K562 (cell line): ENCODE measurements at regions of chr19 and their contacts with region 1.

Region 1: DNA sequence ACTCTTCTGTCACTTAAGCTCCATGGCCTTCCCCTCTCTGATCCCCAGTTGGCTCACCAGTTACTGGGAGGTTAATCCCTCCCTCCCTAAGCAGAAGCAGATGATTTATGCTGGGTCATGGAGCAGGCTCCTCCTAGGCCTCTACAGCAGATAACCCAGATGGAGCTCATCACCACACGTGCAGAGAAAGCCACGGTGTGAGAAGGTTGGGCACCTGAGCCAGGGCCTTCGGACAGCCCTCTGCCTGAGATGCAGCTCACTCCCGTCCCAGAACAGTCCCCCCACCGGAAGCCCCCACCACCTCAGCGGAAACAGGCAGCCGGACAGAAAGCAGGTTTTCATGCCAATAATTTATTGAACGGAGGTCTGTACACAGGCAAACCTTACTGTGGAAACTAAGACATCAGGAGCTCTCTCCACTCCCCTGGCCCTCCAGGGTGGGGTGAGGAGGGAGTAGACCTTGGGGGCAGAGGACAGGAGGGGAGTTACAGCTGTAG is 9.8 kb downstream of the ZNF526 start:
- DNase-seq: peak in 2 of 4 experiments; percentile 86 to 89
- ATAC-seq: peak; percentile 94
- H3K4me3 ChIP-seq: no peak overlapping the region
- H3K27ac ChIP-seq: peak overlapping the region; percentile 75
- H3K4me1 ChIP-seq: peaks cover 21 to 40% of the 10 kb centered on the region in 2 experiments
- H3K27me3 ChIP-seq: no peaks in the 10 kb centered on the region
- CTCF ChIP-seq: no peak
- EP300 ChIP-seq: peak; percentile 32; the same call in 1 of the 2 replicates
- POLR2A ChIP-seq: peak; percentile 59
- RAD21 ChIP-seq: no peak

Region 2: GRCh38 chr19:42053037-42053935 is 176.6 kb before region 1 on chr19:
- CTCF ChIA-PET with region 1: no interaction called
- POLR2A ChIA-PET with region 1: no interaction called
- in situ Hi-C with region 1: no loop called
- intact Hi-C with region 1: no loop called
- DNase-seq: no peak
- ATAC-seq: no peak
- H3K4me3 ChIP-seq: no peak overlapping the region
- H3K27ac ChIP-seq: no peak overlapping the region
- H3K4me1 ChIP-seq: peaks cover 10 to 12% of the 10 kb centered on the region in 2 experiments; a peak in 3 of 5 replicates
- H3K27me3 ChIP-seq: peaks cover 29 to 50% of the 10 kb centered on the region in 2 experiments
- CTCF ChIP-seq: no peak
- EP300 ChIP-seq: no peak
- POLR2A ChIP-seq: no peak
- RAD21 ChIP-seq: no peak

Region 3: GRCh38 chr19:42184401-42184861 is 45.5 kb before region 1 on chr19:
- CTCF ChIA-PET with region 1: no interaction called
- POLR2A ChIA-PET with region 1: no interaction called
- in situ Hi-C with region 1: no loop called
- intact Hi-C with region 1: loop called (anchors 5 kb)
- DNase-seq: peak; percentile 81 to 86 (median 86)
- ATAC-seq: peak; percentile 98
- H3K4me3 ChIP-seq: no peak overlapping the region
- H3K27ac ChIP-seq: no peak overlapping the region
- H3K4me1 ChIP-seq: peaks cover 0 to 6% of the 10 kb centered on the region in 2 experiments; a peak in 2 of 5 replicates
- H3K27me3 ChIP-seq: peaks cover 14 to 19% of the 10 kb centered on the region in 2 experiments
- CTCF ChIP-seq: peak; percentile 83 to 95 (median 87)
- EP300 ChIP-seq: no peak
- POLR2A ChIP-seq: no peak
- RAD21 ChIP-seq: peak; percentile 58 to 80